CD8-positive, alpha-beta T cell (primary cell): ENCODE measurements at regions of chr13 and their contacts with region 1.

Region 1: DNA sequence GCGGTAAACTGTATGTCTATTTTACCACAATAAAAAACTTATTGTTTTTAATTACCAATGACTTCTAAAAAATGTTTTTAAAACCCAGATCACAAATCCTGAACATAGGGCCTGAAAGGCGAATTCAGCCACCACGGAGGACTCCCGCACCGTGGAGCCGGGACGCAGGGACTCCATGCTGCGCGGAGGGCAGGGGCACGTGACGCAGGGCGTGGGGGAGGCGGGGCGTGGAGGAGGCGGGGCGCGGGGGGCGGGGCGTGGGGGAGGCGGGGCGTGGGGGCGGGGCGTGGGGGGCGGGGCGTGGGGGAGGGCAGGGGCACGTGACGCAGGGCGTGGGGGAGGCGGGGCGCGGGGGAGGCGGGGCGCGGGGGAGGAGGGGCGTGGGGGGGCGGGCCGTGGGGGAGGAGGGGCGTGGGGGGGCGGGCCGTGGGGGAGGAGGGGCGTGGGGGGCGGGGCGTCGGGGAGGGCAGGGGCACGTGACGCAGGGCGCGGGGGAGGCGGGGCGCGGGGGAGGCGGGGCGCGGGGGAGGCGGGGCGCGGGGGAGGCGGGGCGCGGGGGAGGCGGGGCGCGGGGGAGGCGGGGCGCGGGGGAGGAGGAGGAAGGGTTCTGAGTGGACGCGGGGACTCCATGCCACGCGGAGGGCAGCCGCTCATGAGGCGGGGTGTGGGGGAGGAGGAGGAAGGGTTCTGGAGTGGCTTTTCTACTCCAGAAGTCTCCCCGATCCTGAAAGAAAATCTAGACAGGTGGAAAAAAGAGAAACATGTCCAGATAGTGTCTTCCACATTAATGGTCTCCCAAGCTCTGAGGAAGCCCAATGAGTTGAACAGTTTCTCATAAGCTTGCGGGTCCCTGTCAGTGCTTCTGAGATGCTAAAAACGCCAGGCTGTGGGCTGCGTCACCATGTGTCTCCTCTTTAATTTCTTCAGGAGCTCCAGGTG is 4.4 kb upstream of the PROZ start:
- DNase-seq: peak; percentile 51 to 88 (median 75)
- ATAC-seq: peak; percentile 84
- H3K4me3 ChIP-seq: peak overlapping the region; percentile 52 to 56
- H3K4me3 Mint-ChIP-seq: peak overlapping the region; percentile 83
- H3K27ac ChIP-seq: peak overlapping the region; percentile 19 to 72
- H3K27ac Mint-ChIP-seq: peak overlapping the region; percentile 78
- H3K4me1 ChIP-seq: peaks cover 21% of the 10 kb centered on the region
- H3K4me1 Mint-ChIP-seq: peaks cover 17% of the 10 kb centered on the region
- H3K27me3 ChIP-seq: peaks cover 0 to 6% of the 10 kb centered on the region in 2 experiments
- H3K27me3 Mint-ChIP-seq: peaks cover 4% of the 10 kb centered on the region
- CTCF ChIP-seq: no peak

Region 2: GRCh38 chr13:112968908-112969691 is 185.0 kb before region 1 on chr13 and contains the start of gene MCF2L:
- CTCF ChIA-PET with region 1: no interaction called
- POLR2A ChIA-PET with region 1: interaction called, 3 read pairs
- intact Hi-C with region 1: loop called (anchors 1 to 5 kb)
- DNase-seq: peak; percentile 31 to 83 (median 69)
- ATAC-seq: peak; percentile 75
- H3K4me3 ChIP-seq: peak within 1 kb of the TSS; percentile 63 to 66
- H3K4me3 Mint-ChIP-seq: peak within 1 kb of the TSS; percentile 96
- H3K27ac ChIP-seq: peak within 1 kb of the TSS; percentile 53 to 69
- H3K27ac Mint-ChIP-seq: peak within 1 kb of the TSS; percentile 95
- H3K4me1 ChIP-seq: peaks cover 23% of the 10 kb centered on the region
- H3K4me1 Mint-ChIP-seq: peaks cover 41% of the 10 kb centered on the region
- H3K27me3 ChIP-seq: no peaks in the 10 kb centered on the region
- H3K27me3 Mint-ChIP-seq: no peaks in the 10 kb centered on the region
- CTCF ChIP-seq: no peak
- total RNA-seq, gene MCF2L: 13.7 to 15.0 TPM

Region 3: GRCh38 chr13:113231306-113232207 is 77.5 kb after region 1 on chr13:
- CTCF ChIA-PET with region 1: no interaction called
- POLR2A ChIA-PET with region 1: no interaction called
- intact Hi-C with region 1: no loop called
- DNase-seq: no peak
- ATAC-seq: no peak
- H3K4me3 ChIP-seq: no peak overlapping the region
- H3K4me3 Mint-ChIP-seq: no peak overlapping the region
- H3K27ac ChIP-seq: no peak overlapping the region
- H3K27ac Mint-ChIP-seq: peak overlapping the region; percentile 68
- H3K4me1 ChIP-seq: no peaks in the 10 kb centered on the region
- H3K4me1 Mint-ChIP-seq: no peaks in the 10 kb centered on the region
- H3K27me3 ChIP-seq: no peaks in the 10 kb centered on the region
- H3K27me3 Mint-ChIP-seq: no peaks in the 10 kb centered on the region
- CTCF ChIP-seq: no peak

Region 4: GRCh38 chr13:113393563-113394338 is 239.7 kb after region 1 on chr13:
- CTCF ChIA-PET with region 1: no interaction called
- POLR2A ChIA-PET with region 1: no interaction called
- intact Hi-C with region 1: loop called (anchors 10 kb)
- DNase-seq: peak; percentile 66 to 88 (median 81)
- ATAC-seq: peak; percentile 96
- H3K4me3 ChIP-seq: peak overlapping the region; percentile 61 to 67
- H3K4me3 Mint-ChIP-seq: peak overlapping the region; percentile 87
- H3K27ac ChIP-seq: no peak overlapping the region
- H3K27ac Mint-ChIP-seq: peak overlapping the region; percentile 72
- H3K4me1 ChIP-seq: peaks cover 8% of the 10 kb centered on the region
- H3K4me1 Mint-ChIP-seq: peaks cover 3% of the 10 kb centered on the region
- H3K27me3 ChIP-seq: no peaks in the 10 kb centered on the region
- H3K27me3 Mint-ChIP-seq: no peaks in the 10 kb centered on the region
- CTCF ChIP-seq: peak; percentile 77